Astrocyte of the cerebellum (primary cell): ENCODE measurements at regions of chr19 and their contacts with region 1.

Region 1: GRCh38 chr19:45643024-45643926 is 4.1 kb upstream of the EML2 start:
- DNase-seq: peak; percentile 50
- H3K4me3 ChIP-seq: peak overlapping the region; percentile 29
- CTCF ChIP-seq: peak; percentile 99

Region 2: GRCh38 chr19:45558399-45558878 is 84.8 kb before region 1 on chr19:
- in situ Hi-C with region 1: loop called (anchors 10 kb)
- DNase-seq: no peak
- H3K4me3 ChIP-seq: no peak overlapping the region
- CTCF ChIP-seq: peak; percentile 81

Region 3: GRCh38 chr19:45601524-45602374 is 41.5 kb before region 1 on chr19 and contains the start of gene GPR4:
- in situ Hi-C with region 1: no loop called
- DNase-seq: no peak
- H3K4me3 ChIP-seq: no peak within 1 kb of the TSS
- CTCF ChIP-seq: no peak

Region 4: GRCh38 chr19:45681391-45682015 is 38.2 kb after region 1 on chr19:
- in situ Hi-C with region 1: no loop called
- DNase-seq: peak; percentile 39
- H3K4me3 ChIP-seq: peak overlapping the region; percentile 32
- CTCF ChIP-seq: peak; percentile 92

Region 5: GRCh38 chr19:45705115-45705514 is 61.8 kb after region 1 on chr19:
- in situ Hi-C with region 1: no loop called
- DNase-seq: no peak
- H3K4me3 ChIP-seq: no peak overlapping the region
- CTCF ChIP-seq: no peak